Activated T-helper 1 cell treated with anti-CD3 and anti-CD28 coated beads, Interleukin-12 subunit alpha, Interleukin-12 subunit beta, Interleukin-2, Interleukin-4 antibody, amounts not matched to agents 30 ng/mL and 10 ng/mL and 1 ng/mL, durations not matched to agents 14 hours and 24 hours and 36 hours (primary cell): ENCODE measurements at regions of chr13 and their contacts with region 1.

Region 1: GRCh38 chr13:71358218-71358617 is 508.8 kb downstream of the DACH1 start:
- DNase-seq: no peak
- H3K4me3 Mint-ChIP-seq: no peak overlapping the region
- H3K27ac Mint-ChIP-seq: no peak overlapping the region
- H3K4me1 Mint-ChIP-seq: no peaks in the 10 kb centered on the region
- H3K27me3 Mint-ChIP-seq: no peaks in the 10 kb centered on the region

Region 2: GRCh38 chr13:71338070-71338469 is 20.1 kb before region 1 on chr13:
- intact Hi-C with region 1: loop called (anchors 2 kb)
- DNase-seq: no peak
- H3K4me3 Mint-ChIP-seq: no peak overlapping the region
- H3K27ac Mint-ChIP-seq: no peak overlapping the region
- H3K4me1 Mint-ChIP-seq: no peaks in the 10 kb centered on the region
- H3K27me3 Mint-ChIP-seq: no peaks in the 10 kb centered on the region

Region 3: DNA sequence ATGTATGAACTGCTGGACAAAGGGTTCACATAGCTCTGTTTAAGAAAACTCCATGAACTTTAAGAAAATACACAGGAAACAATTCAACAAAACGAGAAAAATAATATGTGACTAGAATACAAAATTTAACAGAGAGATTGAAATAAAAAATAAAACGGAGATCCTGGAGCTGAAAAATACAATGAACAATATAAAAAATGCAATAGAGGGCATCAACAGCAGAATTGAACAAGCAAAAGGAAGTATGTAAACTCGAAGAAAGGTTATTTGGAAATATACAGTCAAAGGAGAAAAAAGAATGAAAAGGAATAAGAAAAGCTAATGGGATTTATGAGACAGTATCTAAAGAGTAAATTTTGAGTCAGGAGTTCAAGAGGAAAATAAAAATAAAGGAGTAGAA is 671.8 kb after region 1 on chr13:
- intact Hi-C with region 1: no loop called
- DNase-seq: no peak
- H3K4me3 Mint-ChIP-seq: no peak overlapping the region
- H3K27ac Mint-ChIP-seq: no peak overlapping the region
- H3K4me1 Mint-ChIP-seq: no peaks in the 10 kb centered on the region
- H3K27me3 Mint-ChIP-seq: no peaks in the 10 kb centered on the region